HCT116 (cell line): ENCODE measurements at regions of chr17 and their contacts with region 1.

Region 1: DNA sequence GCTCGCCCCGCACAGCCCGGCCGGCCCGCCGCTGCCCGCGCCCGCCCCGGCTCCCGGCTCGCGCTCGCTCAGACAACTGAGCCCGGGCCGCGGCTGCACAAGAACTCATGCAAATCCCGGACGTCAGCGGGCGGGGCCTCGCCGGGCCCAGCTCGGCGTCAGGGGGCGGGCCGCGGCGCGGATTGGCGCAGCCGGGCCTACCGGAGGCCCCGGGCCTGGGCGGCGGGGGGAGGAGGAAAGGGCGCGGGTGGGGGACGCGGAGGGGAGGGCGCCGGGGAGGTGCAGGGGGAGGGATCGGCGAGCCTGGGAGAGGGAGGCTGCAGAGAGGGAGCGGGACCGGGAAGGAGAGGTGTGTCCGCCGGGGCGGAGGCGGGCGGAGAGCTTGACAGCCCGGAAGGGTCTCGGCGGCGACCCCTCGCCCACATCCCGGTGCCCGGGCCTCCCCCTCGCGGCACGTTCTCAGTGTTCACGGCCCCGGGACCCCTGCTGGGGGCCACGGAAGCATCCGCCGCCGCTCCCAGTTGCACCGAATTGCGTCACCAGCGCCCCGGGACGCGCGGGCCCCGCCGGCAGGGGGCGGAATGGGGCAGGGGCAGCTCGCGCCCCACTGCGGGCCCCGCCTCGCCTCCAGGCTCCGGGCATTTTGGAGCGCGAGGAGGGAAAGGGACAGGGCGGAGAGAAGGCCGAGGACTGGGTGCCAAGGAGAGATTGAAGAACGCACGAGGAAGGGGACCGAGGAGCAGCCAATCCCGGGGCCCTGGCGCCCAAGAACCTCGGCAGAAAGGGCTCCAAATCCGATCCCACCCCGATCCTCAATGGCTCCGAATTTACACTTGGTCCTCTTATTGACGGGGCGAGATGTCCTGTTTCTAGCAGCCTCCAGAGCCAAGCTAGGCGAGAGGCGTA is at the start of gene CBX4:
- DNase-seq: peak; percentile 87
- ATAC-seq: peak; percentile 82
- H3K4me3 ChIP-seq: peak within 1 kb of the TSS; percentile 84 to 95
- H3K27ac ChIP-seq: peak within 1 kb of the TSS; percentile 94
- H3K4me1 ChIP-seq: peaks cover 39 to 53% of the 10 kb centered on the region in 2 experiments
- H3K27me3 ChIP-seq: no peaks in the 10 kb centered on the region
- CTCF ChIP-seq: peak; percentile 75 to 96 (median 81)
- POLR2A ChIP-seq: peak; percentile 91
- RAD21 ChIP-seq: peak; percentile 67
- total RNA-seq, gene CBX4: 60.9 TPM

Region 2: GRCh38 chr17:79691931-79692330 is 147.7 kb before region 1 on chr17:
- CTCF ChIA-PET with region 1: no interaction called
- POLR2A ChIA-PET with region 1: no interaction called
- RAD21 ChIA-PET with region 1: no interaction called
- intact Hi-C with region 1: no loop called
- DNase-seq: no peak
- ATAC-seq: no peak
- H3K4me3 ChIP-seq: no peak overlapping the region
- H3K27ac ChIP-seq: no peak overlapping the region
- H3K4me1 ChIP-seq: peaks cover 13 to 15% of the 10 kb centered on the region in 2 experiments
- H3K27me3 ChIP-seq: peaks cover 6% of the 10 kb centered on the region; the same call in 1 of the 2 replicates
- CTCF ChIP-seq: no peak
- POLR2A ChIP-seq: no peak
- RAD21 ChIP-seq: no peak

Region 3: DNA sequence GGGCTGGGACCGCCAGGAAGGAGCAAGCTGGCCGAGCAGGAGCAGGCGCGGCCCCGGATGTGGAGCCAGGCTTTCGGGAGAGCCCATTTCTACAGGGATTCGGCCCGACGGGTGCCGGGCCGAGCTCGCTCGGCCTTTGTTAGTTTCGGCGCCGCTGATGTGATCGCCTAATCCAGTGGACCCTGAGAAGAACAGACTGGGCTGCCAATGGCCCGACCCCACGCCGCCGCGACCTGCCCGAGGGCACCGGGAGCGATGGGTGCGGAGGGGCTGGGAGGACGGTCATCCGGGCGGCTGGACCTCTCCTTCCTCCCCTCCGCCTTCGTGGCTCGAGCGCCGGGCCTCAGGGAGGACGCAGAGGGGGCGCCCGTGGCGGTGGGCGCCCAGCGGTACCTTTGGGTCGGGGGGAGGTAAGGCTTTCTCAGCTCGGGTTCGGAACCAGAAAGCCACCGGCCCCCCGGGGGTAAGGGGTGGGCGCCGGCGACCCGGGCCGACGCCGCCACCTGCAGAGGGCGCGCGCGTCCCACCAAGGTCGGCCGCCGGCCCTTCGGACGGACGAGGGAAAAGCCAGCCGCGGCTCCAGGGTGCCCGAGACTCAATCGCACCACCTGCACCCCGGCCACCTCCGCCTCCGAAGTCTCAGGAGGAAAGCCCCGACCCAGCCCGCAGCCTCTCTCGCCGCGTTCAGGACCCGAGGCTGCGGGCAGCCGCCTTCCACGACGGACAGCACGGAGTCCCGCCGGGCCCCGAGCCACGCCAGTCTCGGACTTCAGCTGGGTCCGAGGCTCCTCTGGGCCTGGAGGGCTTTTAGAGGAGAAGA is 49.9 kb before region 1 on chr17:
- CTCF ChIA-PET with region 1: interaction called, 10 read pairs
- POLR2A ChIA-PET with region 1: interaction called, 4 read pairs
- RAD21 ChIA-PET with region 1: interaction called in 1 of 2 experiments, 3 read pairs
- intact Hi-C with region 1: loop called (anchors 2 kb)
- DNase-seq: no peak
- ATAC-seq: peak; percentile 80
- H3K4me3 ChIP-seq: no peak overlapping the region
- H3K27ac ChIP-seq: no peak overlapping the region; the same call in 1 of the 2 replicates
- H3K4me1 ChIP-seq: peaks cover 19 to 31% of the 10 kb centered on the region in 2 experiments
- H3K27me3 ChIP-seq: no peaks in the 10 kb centered on the region
- CTCF ChIP-seq: peak; percentile 89 to 95 (median 92)
- POLR2A ChIP-seq: no peak
- RAD21 ChIP-seq: peak; percentile 97; the same call in 1 of the 2 replicates

Region 4: GRCh38 chr17:79810130-79811010 is 29.2 kb before region 1 on chr17:
- CTCF ChIA-PET with region 1: interaction called, 18 read pairs
- POLR2A ChIA-PET with region 1: interaction called, 17 read pairs
- RAD21 ChIA-PET with region 1: interaction called, 4 read pairs
- intact Hi-C with region 1: loop called (anchors 2 kb)
- DNase-seq: peak; percentile 70
- ATAC-seq: peak; percentile 89
- H3K4me3 ChIP-seq: peak overlapping the region; percentile 28 to 53
- H3K27ac ChIP-seq: no peak overlapping the region
- H3K4me1 ChIP-seq: peaks cover 25 to 44% of the 10 kb centered on the region in 2 experiments
- H3K27me3 ChIP-seq: peaks cover 6% of the 10 kb centered on the region; the same call in 1 of the 2 replicates
- CTCF ChIP-seq: no peak
- POLR2A ChIP-seq: no peak
- RAD21 ChIP-seq: no peak

Region 5: GRCh38 chr17:79888811-79889634 is 49.4 kb after region 1 on chr17:
- CTCF ChIA-PET with region 1: interaction called, 11 read pairs
- POLR2A ChIA-PET with region 1: interaction called, 4 read pairs
- RAD21 ChIA-PET with region 1: no interaction called
- intact Hi-C with region 1: no loop called
- DNase-seq: no peak
- ATAC-seq: no peak
- H3K4me3 ChIP-seq: no peak overlapping the region
- H3K27ac ChIP-seq: no peak overlapping the region
- H3K4me1 ChIP-seq: peaks cover 0 to 12% of the 10 kb centered on the region in 2 experiments; a peak in 2 of 4 replicates
- H3K27me3 ChIP-seq: peaks cover 16% of the 10 kb centered on the region; the same call in 1 of the 2 replicates
- CTCF ChIP-seq: no peak
- POLR2A ChIP-seq: no peak
- RAD21 ChIP-seq: no peak

Region 6: DNA sequence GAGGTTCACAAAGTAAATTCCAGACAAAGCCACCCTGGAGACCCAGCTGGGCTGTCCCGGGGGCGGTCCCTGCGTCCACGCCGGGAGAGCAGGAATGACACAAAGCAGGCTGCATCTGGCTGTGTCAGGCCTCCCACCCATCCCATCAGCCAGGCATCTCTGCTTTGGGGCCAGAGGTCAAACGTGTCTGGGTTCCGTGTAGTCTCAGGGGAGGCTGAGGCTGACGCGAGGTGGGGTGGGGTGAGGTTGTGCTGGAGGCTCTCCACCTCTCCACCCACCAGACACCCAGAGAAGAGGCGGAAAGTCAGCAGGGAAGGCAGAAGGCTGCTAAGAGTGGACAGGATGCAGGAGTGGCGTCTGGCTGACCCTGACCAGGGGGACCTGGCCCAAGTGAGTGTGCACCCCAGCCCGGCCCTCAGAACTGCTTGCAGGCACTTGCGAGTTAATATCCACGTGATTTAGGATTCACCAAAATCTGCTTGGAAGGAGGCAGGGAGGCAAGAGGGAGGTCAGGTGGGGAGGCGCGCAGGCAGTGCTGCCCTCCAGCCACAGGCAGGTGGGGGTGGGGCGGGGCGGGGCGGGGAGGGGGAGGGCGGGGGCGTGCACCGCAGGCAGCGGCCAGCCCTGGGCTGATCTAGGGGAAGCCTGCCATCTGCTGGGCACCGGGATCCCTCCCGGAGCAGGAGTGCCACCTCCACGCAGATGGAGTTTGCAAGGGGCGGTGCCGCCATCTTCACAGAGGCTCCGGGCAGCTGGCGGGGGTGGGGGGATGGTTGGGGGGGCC is 151.7 kb after region 1 on chr17:
- CTCF ChIA-PET with region 1: interaction called, 6 read pairs
- POLR2A ChIA-PET with region 1: interaction called, 10 read pairs
- RAD21 ChIA-PET with region 1: interaction called in 1 of 2 experiments, 5 read pairs
- intact Hi-C with region 1: loop called (anchors 2 kb)
- DNase-seq: peak; percentile 68
- ATAC-seq: peak; percentile 89
- H3K4me3 ChIP-seq: no peak overlapping the region
- H3K27ac ChIP-seq: peak overlapping the region; percentile 37; the same call in 1 of the 2 replicates
- H3K4me1 ChIP-seq: peaks cover 51 to 57% of the 10 kb centered on the region in 2 experiments
- H3K27me3 ChIP-seq: no peaks in the 10 kb centered on the region
- CTCF ChIP-seq: peak in 2 of 3 experiments; percentile 44 to 71; a peak in 5 of 6 replicates
- POLR2A ChIP-seq: no peak
- RAD21 ChIP-seq: peak; percentile 82